Panc1 (cell line): ENCODE measurements at regions of chr2 and their contacts with region 1.

Region 1: GRCh38 chr2:163351966-163352365 is 383.8 kb downstream of the FIGN start:
- DNase-seq: no peak
- ATAC-seq: no peak
- H3K4me3 ChIP-seq: no peak overlapping the region
- H3K27ac ChIP-seq: peak overlapping the region; percentile 100
- H3K4me1 ChIP-seq: peaks cover 25% of the 10 kb centered on the region
- H3K27me3 ChIP-seq: no peaks in the 10 kb centered on the region
- CTCF ChIP-seq: no peak

Region 2: GRCh38 chr2:163213661-163214389 is 138.1 kb before region 1 on chr2:
- CTCF ChIA-PET with region 1: no interaction called
- POLR2A ChIA-PET with region 1: interaction called, 11 read pairs
- in situ Hi-C with region 1: no loop called
- intact Hi-C with region 1: no loop called
- DNase-seq: no peak
- ATAC-seq: peak; percentile 78
- H3K4me3 ChIP-seq: no peak overlapping the region
- H3K27ac ChIP-seq: no peak overlapping the region
- H3K4me1 ChIP-seq: no peaks in the 10 kb centered on the region
- H3K27me3 ChIP-seq: no peaks in the 10 kb centered on the region
- CTCF ChIP-seq: no peak

Region 3: DNA sequence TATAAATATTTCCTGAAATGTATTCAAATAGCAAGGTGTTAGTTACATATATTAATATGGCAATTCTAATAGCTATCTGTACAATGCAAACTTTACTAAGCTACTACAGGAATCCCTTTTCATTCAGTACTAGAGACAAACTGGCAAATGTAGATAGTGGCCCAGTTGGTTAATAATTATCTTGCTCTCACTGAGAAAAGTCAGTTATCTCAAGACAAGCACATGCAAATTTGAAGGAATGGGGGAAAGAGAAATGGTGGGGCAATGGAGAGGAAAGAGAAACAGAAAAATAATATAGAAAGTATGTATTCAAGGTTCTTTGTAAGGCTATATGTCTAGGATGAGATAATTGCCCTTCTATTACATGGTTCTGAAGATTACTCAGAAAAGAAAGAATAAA is 103.8 kb after region 1 on chr2:
- CTCF ChIA-PET with region 1: no interaction called
- POLR2A ChIA-PET with region 1: no interaction called
- in situ Hi-C with region 1: no loop called
- intact Hi-C with region 1: no loop called
- DNase-seq: no peak
- ATAC-seq: no peak
- H3K4me3 ChIP-seq: no peak overlapping the region
- H3K27ac ChIP-seq: no peak overlapping the region
- H3K4me1 ChIP-seq: no peaks in the 10 kb centered on the region
- H3K27me3 ChIP-seq: no peaks in the 10 kb centered on the region
- CTCF ChIP-seq: no peak